ENCODE measurements at regions of chr19 and their contacts with region 1.

Region 1: DNA sequence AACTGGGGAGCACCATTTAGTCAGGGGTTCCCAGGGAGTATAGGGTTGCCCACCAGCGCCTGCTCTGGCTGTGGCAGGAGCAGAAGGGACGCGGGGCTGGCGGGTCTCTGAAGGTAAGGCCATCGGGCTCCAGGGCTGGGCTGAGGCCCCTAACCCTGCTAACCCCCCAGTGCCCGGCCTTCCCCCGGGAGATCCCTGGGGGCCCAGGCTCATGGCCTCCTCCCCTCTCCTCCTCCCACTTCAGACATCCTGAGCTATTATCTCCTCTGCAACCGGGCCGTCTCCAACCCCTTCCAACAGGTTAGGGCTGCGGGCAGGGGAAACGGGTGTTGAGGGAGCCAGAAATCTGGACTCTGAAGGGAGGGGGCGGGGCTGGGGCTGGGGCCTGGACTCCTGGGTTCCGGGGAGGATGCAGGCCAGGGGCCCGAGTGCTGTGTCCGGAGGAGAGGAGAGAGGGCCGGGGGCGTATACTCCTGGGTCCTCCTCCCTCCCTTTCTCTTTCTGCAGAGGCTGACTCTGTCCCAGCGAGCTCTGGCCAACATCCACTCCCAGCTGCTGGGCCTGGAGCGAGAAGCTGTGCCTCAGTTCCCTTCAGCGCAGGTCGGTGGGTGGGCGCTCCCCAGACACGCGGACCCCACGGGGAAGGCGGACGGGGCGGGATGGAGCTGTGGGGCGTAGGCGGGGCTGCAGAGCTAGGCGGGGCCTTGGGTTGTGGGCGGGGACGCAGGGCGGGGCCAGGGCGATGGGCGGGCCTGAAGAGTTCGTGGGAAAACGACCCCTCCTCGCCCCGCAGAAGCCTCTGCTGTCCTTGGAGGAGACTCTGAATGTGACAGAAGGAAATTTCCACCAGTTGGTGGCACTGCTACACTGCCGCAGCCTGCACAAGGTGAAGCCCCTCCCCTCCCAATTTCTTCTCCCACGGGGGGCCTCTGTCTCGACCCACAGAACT is 15.3 kb downstream of the TTYH1 start:
- DNase-seq: peak; percentile 81
- H3K4me3 ChIP-seq: peak overlapping the region; percentile 47
- H3K27ac ChIP-seq: no peak overlapping the region
- H3K4me1 ChIP-seq: peaks cover 16% of the 10 kb centered on the region
- H3K27me3 ChIP-seq: peaks cover 4% of the 10 kb centered on the region
- CTCF ChIP-seq: peak; percentile 54

Region 2: DNA sequence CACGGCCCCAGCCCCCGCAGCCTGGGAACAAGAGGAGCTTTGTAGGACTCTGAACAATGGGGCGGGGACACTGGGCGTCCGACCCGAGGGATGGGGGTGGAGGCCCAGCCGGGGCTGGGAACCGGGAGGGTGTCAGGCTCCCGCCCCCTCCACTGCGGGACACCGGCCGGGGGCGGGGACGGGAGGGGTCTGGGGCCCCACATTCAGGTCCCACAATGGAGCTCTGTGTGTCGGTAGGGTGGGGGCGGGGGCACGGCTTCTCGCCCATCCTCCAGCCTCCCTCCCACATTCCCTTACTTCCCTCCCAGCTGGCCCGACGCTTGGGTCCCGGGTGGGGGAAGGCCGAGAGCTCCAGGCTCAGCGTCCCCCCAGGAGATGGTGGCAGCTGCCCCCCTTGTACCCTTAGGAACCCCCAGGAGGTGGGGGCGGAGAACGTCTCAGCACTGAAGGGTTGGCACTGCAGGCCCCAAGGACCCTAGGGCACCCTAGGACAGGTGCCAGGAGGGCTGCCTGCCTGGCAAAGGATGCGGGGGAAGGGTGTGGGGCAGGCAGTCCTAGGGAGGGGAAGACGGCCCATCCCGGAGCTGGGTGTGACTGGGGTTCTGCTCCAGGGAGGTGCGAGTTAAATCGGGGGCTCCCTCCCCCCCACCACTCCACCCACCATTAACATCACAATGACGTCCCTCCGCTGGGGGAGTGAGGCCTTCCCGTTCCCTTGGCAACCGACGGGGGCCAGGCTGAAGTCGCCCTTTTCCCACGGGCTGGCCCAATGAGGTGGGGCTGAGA is 10.0 kb before region 1 on chr19:
- CTCF ChIA-PET with region 1: no interaction called
- POLR2A ChIA-PET with region 1: interaction called, 13 read pairs
- intact Hi-C with region 1: no loop called
- DNase-seq: no peak
- H3K4me3 ChIP-seq: no peak overlapping the region
- H3K27ac ChIP-seq: no peak overlapping the region
- H3K4me1 ChIP-seq: peaks cover 4% of the 10 kb centered on the region
- H3K27me3 ChIP-seq: peaks cover 12% of the 10 kb centered on the region
- CTCF ChIP-seq: no peak